Calu3 (cell line): ENCODE measurements at regions of chr4 and their contacts with region 1.

Region 1: DNA sequence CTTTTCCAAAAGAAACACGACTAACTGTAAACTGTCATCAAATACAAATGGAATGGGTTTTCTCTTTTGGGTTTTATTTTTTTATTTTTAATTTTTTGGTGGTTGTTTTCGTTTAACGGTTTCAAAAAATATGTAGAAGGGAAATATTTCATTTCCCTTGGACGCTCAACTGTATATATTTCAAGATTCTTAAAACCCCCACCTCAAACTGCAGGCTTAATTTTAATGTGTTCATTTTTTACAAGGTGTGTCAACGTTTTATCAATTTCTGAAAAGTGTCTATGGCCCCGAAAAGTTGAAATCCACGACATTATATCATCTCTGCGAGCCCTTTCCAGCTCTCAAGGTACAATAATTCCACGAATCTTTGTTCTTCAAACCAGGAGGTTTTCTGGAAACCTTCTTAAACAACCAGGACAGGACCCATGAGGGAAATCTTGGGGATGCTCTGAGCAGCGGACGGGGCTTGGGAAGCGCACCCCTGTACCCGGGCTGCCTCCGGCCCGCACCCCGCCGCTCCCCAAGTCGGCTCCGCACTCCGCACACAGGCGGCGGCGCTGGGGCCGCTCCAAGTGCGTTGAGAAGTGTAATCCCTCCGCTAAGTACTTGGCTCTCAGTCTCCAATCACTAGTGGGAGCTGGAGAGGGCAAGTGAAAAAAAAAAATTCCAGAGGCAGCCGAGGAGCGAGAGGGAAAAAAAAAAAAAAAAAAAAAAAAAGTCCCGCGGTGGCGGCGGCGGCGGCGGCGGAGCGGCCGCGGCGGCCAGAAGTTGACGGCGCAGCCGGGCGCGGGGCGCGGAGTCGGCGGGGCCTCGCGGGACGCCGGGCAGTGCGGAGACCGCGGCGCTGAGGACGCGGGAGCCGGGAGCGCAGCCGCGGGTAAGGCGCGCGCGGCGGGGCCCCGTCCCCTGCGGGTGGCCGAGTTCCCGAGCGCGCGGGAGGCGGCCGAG is at the start of gene BMPR1B:
- DNase-seq: peak; percentile 28
- H3K4me3 Mint-ChIP-seq: peak within 1 kb of the TSS; percentile 75
- H3K27ac Mint-ChIP-seq: peak within 1 kb of the TSS; percentile 81
- H3K4me1 Mint-ChIP-seq: peaks cover 26% of the 10 kb centered on the region
- H3K27me3 Mint-ChIP-seq: no peaks in the 10 kb centered on the region
- CTCF ChIP-seq: no peak
- total RNA-seq, gene BMPR1B: 6.3 and 9.2 TPM in 2 replicates

Region 2: DNA sequence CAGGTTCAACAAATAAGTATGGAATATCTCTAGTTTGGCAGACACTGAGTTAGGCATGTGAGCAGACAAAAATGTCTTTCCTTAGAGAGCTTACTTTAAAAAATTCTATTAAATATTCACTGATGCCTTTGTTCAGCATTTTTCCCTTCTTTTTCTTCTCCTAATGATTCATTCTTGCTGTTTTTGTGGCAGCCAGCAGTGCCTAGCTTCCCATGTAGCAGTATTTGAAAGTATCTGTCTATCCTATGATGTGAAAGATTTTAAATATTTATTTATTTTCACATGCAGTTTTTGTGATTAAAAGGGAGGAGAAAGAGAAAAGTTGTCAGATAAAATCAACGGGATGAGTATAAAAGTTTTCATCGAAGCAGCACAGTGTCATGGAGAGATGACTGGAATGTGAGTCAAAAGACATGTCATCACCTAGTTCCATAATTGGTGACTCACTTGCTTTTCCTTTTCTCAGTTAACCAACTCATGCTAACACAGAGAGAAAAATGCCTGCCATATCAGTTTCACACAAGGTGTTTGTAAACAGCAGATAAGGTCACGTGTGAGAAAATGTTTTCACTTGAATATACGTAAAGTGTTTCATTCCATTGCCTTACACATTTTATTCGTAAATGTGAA is 70.1 kb after region 1 on chr4:
- CTCF ChIA-PET with region 1: no interaction called
- intact Hi-C with region 1: loop called (anchors 5 kb)
- DNase-seq: peak; percentile 4
- H3K4me3 Mint-ChIP-seq: no peak overlapping the region
- H3K27ac Mint-ChIP-seq: peak overlapping the region; percentile 10
- H3K4me1 Mint-ChIP-seq: peaks cover 13% of the 10 kb centered on the region
- H3K27me3 Mint-ChIP-seq: no peaks in the 10 kb centered on the region
- CTCF ChIP-seq: no peak

Region 3: DNA sequence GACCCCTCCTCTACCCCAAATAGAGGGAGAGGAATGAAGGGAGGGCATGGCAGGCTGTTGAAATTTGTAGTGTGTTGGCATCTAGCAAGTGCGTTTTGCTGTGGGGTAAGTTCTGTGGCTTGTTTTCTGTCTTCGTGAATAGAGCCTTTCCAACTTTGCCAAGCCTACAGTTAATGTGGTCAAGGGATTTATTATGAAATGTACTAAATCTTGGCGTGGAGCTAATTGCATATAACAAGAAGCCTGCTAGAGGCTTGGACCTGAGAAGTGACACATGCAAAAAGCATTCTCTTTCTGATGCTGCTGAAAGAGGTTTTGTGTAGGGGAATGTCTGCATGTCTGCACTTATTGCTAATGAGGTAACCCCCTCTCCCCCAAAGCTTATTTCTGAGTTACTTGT is 132.5 kb after region 1 on chr4:
- CTCF ChIA-PET with region 1: no interaction called
- intact Hi-C with region 1: loop called (anchors 5 kb)
- DNase-seq: no peak
- H3K4me3 Mint-ChIP-seq: no peak overlapping the region
- H3K27ac Mint-ChIP-seq: no peak overlapping the region
- H3K4me1 Mint-ChIP-seq: peaks cover 7% of the 10 kb centered on the region
- H3K27me3 Mint-ChIP-seq: no peaks in the 10 kb centered on the region
- CTCF ChIP-seq: no peak

Region 4: DNA sequence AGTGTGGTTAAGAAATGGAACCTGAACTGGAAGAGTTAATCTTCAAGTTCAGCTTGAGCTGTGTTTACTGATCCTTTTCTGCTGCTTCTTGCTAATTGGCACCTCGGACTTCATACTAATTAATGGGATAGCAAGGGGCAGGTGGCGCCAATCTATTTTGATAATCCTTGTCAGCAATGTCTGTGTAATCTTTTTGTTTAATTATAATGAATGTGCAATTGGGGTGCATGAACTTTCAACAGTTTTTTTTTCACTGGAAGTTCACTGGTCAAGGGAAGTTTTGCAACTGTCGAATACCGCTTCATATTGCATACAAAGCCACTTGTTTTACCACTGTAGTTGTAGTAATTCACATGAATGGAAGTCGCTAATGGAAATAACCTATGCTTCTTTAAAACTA is 261.3 kb after region 1 on chr4:
- CTCF ChIA-PET with region 1: no interaction called
- intact Hi-C with region 1: loop called (anchors 10 kb)
- DNase-seq: no peak
- H3K4me3 Mint-ChIP-seq: no peak overlapping the region
- H3K27ac Mint-ChIP-seq: no peak overlapping the region
- H3K4me1 Mint-ChIP-seq: peaks cover 21% of the 10 kb centered on the region
- H3K27me3 Mint-ChIP-seq: no peaks in the 10 kb centered on the region
- CTCF ChIP-seq: no peak

Region 5: DNA sequence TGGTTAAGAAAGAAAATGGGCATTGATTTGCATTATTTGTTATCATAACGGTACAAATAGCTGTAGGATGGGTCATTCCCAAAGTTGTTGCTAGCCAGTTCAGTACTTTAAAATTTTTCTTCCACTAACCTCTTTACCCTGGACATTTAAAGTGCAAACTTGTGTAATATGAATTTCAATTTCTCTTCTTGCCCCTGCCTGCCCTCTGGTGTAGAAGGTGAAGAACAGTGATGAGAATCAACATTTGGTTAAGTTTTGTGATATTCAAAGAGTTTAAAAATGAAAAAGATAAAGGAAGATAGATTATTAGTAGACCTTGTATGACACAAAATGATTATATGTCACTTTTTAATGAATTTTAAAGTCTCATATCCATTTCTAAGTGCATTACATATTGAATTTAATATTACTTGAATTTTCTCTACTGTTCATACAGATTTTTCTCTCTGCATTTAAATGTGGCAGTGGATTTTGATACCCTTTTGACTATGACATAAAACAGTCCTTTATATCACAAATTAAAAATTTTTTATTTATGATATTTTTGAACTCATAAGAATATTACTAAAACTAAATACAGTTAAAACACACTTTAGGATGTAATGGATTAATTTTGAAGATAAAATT is 338.0 kb after region 1 on chr4:
- CTCF ChIA-PET with region 1: interaction called, 4 read pairs
- intact Hi-C with region 1: loop called (anchors 2 kb)
- DNase-seq: peak; percentile 44
- H3K4me3 Mint-ChIP-seq: no peak overlapping the region
- H3K27ac Mint-ChIP-seq: no peak overlapping the region
- H3K4me1 Mint-ChIP-seq: peaks cover 20% of the 10 kb centered on the region
- H3K27me3 Mint-ChIP-seq: no peaks in the 10 kb centered on the region
- CTCF ChIP-seq: peak; percentile 50